IMR-90 (cell line): ENCODE measurements at regions of chr7 and their contacts with region 1.

Region 1: GRCh38 chr7:148698397-148699023 is at the start of gene CUL1:
- DNase-seq: peak; percentile 52
- ATAC-seq: peak; percentile 83
- H3K4me3 ChIP-seq: peak within 1 kb of the TSS; percentile 92
- H3K27ac ChIP-seq: peak within 1 kb of the TSS; percentile 90
- H3K4me1 ChIP-seq: peaks cover 10% of the 10 kb centered on the region
- H3K27me3 ChIP-seq: no peaks in the 10 kb centered on the region
- CTCF ChIP-seq: no peak
- POLR2A ChIP-seq: no peak; the same call in 1 of the 2 replicates
- RAD21 ChIP-seq: no peak
- total RNA-seq, gene CUL1: 46.2 and 61.4 TPM in 2 replicates

Region 2: DNA sequence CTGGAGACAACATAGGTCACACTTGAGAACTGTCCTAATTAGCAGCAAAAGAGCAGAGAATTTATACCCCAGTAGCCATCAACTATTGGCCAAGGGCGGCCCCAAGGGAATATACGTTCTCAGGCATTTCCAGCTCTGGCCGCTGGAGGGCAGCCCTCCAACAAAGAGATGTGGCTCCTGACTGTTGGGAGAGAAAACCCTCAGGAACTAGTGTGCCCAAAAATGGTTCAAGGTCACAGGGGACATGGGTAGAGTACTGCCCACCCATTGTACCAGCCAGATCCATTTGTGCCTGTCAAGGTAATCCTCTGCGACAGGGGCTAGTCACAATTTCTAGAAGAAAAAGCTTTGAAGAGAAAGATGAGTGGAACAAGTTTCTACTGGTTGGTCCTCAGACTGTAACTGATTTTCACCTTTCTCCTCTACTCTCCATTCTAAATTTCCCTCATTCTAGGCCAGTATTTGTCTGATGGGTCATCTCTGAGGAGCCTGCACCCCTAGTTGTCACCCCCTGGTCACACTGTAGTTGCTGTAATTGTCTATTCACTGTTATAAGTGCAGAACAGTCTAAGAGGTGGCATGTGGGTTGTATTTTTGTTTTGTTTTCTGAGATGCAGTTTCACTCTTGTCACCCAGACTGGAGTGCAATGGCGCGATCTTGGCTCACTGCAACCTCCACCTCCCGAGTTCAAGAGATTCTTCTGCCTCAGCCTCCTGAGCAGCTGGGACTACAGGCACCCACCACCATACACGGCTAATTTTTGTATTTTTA is 122.7 kb before region 1 on chr7:
- CTCF ChIA-PET with region 1: no interaction called
- POLR2A ChIA-PET with region 1: no interaction called
- dilution Hi-C with region 1: no loop called
- in situ Hi-C with region 1: no loop called
- intact Hi-C with region 1: loop called (anchors 2 kb)
- DNase-seq: peak; percentile 41
- ATAC-seq: peak; percentile 98
- H3K4me3 ChIP-seq: no peak overlapping the region
- H3K27ac ChIP-seq: no peak overlapping the region
- H3K4me1 ChIP-seq: no peaks in the 10 kb centered on the region
- H3K27me3 ChIP-seq: peaks cover 2% of the 10 kb centered on the region; the same call in 1 of the 2 replicates
- CTCF ChIP-seq: peak; percentile 85
- POLR2A ChIP-seq: no peak
- RAD21 ChIP-seq: peak; percentile 83

Region 3: GRCh38 chr7:148753224-148753623 is 54.7 kb after region 1 on chr7:
- CTCF ChIA-PET with region 1: no interaction called
- POLR2A ChIA-PET with region 1: no interaction called
- dilution Hi-C with region 1: no loop called
- in situ Hi-C with region 1: no loop called
- intact Hi-C with region 1: no loop called
- DNase-seq: peak; percentile 65
- ATAC-seq: peak; percentile 62; the same call in 1 of the 2 replicates
- H3K4me3 ChIP-seq: no peak overlapping the region
- H3K27ac ChIP-seq: no peak overlapping the region
- H3K4me1 ChIP-seq: peaks cover under 1% of the 10 kb centered on the region
- H3K27me3 ChIP-seq: no peaks in the 10 kb centered on the region
- CTCF ChIP-seq: no peak
- POLR2A ChIP-seq: no peak
- RAD21 ChIP-seq: no peak

Region 4: DNA sequence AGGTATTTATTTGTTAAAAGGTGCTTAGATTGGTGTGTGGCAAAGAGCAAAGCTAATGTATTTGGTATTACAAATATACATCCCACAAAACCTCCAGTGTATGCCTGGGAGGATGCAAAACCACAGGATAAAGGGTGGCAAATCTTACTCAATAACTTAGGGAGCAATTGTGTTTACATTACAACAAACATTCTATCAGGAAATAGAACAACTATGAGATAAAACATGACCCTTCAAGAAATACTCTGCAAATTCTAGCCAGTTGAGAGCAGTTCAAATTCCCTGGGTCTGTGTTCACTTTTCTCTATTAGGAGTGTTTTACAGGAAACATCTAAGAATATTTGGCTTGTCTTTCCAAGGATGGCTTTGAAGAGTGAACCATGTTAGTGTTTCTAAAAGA is 65.1 kb after region 1 on chr7:
- CTCF ChIA-PET with region 1: no interaction called
- POLR2A ChIA-PET with region 1: no interaction called
- dilution Hi-C with region 1: no loop called
- in situ Hi-C with region 1: no loop called
- intact Hi-C with region 1: loop called (anchors 1 kb)
- DNase-seq: peak; percentile 55
- ATAC-seq: peak; percentile 86
- H3K4me3 ChIP-seq: no peak overlapping the region
- H3K27ac ChIP-seq: no peak overlapping the region
- H3K4me1 ChIP-seq: peaks cover 9% of the 10 kb centered on the region
- H3K27me3 ChIP-seq: no peaks in the 10 kb centered on the region
- CTCF ChIP-seq: no peak
- POLR2A ChIP-seq: no peak
- RAD21 ChIP-seq: no peak

Region 5: GRCh38 chr7:148819697-148820360 is 121.3 kb after region 1 on chr7:
- CTCF ChIA-PET with region 1: no interaction called
- POLR2A ChIA-PET with region 1: interaction called, 13 read pairs
- dilution Hi-C with region 1: no loop called
- in situ Hi-C with region 1: no loop called
- intact Hi-C with region 1: no loop called
- DNase-seq: peak; percentile 72
- ATAC-seq: peak; percentile 64
- H3K4me3 ChIP-seq: no peak overlapping the region
- H3K27ac ChIP-seq: no peak overlapping the region
- H3K4me1 ChIP-seq: peaks cover 4% of the 10 kb centered on the region
- H3K27me3 ChIP-seq: no peaks in the 10 kb centered on the region
- CTCF ChIP-seq: no peak
- POLR2A ChIP-seq: no peak
- RAD21 ChIP-seq: no peak

Region 6: GRCh38 chr7:148940702-148941597 is 242.4 kb after region 1 on chr7:
- CTCF ChIA-PET with region 1: no interaction called
- POLR2A ChIA-PET with region 1: no interaction called
- dilution Hi-C with region 1: no loop called
- in situ Hi-C with region 1: no loop called
- intact Hi-C with region 1: loop called (anchors 1 kb)
- DNase-seq: peak; percentile 91
- ATAC-seq: peak; percentile 92
- H3K4me3 ChIP-seq: peak overlapping the region; percentile 80
- H3K27ac ChIP-seq: peak overlapping the region; percentile 70
- H3K4me1 ChIP-seq: no peaks in the 10 kb centered on the region
- H3K27me3 ChIP-seq: no peaks in the 10 kb centered on the region
- CTCF ChIP-seq: no peak
- POLR2A ChIP-seq: no peak
- RAD21 ChIP-seq: no peak